Activated T-helper 2 cell treated with anti-CD3 and anti-CD28 coated beads, Interferon-gamma antibody, Interleukin-2, Interleukin-4, amounts not matched to agents 10 μg/mL and 5 μg/mL and 100 μg/mL, durations not matched to agents 14 hours and 24 hours and 36 hours (primary cell): ENCODE measurements at regions of chr4 and their contacts with region 1.

Region 1: DNA sequence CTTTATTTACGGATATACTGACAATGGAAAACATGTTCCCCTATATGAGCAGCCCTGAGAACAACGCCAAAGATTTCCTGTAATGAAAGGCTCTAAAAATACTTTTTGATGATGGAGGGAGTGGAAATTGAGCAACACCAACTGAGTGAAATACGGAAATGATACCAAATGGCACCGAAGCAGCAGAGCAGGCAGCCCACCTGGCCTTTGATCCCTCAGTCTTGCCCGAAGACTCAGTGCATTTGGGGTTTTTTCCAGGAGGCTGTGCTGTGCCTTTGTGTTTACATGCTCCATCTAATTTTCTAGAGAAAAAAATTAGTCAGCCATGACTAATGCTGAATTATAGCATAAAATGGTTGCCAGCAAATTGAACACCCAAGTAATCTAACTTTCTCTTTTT is 169.9 kb upstream of the RBPJ start:
- DNase-seq: no peak
- H3K4me3 Mint-ChIP-seq: no peak overlapping the region
- H3K27ac Mint-ChIP-seq: peak overlapping the region; percentile 95
- H3K4me1 Mint-ChIP-seq: peaks cover 85% of the 10 kb centered on the region
- H3K27me3 Mint-ChIP-seq: no peaks in the 10 kb centered on the region

Region 2: GRCh38 chr4:26081795-26082498 is 69.0 kb before region 1 on chr4:
- intact Hi-C with region 1: loop called (anchors 1 kb)
- DNase-seq: no peak
- H3K4me3 Mint-ChIP-seq: no peak overlapping the region
- H3K27ac Mint-ChIP-seq: peak overlapping the region; percentile 93
- H3K4me1 Mint-ChIP-seq: peaks cover 79% of the 10 kb centered on the region
- H3K27me3 Mint-ChIP-seq: no peaks in the 10 kb centered on the region

Region 3: DNA sequence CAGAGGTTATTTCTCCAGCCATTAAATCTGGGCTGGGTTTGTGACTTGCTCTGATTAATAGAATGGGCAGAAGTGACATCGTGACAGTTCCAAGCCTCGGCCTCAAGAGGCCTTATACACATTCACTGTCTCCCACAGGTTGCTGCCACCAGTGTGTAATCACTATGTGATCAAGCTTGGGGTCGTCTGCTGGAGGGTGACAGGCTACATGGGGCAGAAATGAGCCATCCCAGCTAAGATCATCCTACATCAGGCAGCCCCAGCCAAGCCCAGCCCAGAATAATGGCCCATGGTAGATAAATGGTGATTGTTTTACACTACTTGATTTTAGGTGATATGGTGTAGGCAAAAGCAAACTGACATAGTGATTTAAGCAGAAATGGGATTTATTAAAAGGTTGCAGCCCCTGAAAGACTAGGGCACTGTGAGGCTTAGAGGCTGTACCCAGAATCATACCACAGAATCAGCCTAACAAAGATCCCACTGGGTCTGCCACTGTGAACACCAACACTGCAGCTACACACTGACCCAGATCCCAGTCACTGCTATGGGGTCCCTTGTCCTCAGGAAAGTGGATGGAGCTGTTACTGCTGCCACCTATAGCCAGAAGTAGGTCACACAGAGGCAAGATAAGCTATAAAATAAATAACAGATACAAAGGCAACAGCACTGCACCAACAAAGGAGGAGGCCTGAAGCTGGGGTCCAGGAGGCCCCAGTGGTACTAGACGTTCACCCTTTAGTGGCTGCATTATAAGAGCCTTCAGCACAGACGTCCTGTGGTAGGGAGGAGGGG is 10.3 kb after region 1 on chr4:
- intact Hi-C with region 1: loop called (anchors 1 kb)
- DNase-seq: no peak
- H3K4me3 Mint-ChIP-seq: no peak overlapping the region
- H3K27ac Mint-ChIP-seq: peak overlapping the region; percentile 44
- H3K4me1 Mint-ChIP-seq: peaks cover 56% of the 10 kb centered on the region
- H3K27me3 Mint-ChIP-seq: no peaks in the 10 kb centered on the region